Activated CD4-positive, alpha-beta memory T cell treated with anti-CD3 and anti-CD28 coated beads, Interleukin-2, amount 10 ng/mL, durations not matched to agents 7 days and 5 days (primary cell): ENCODE measurements at regions of chr1 and their contacts with region 1.

Region 1: GRCh38 chr1:204431310-204432165 is 19.9 kb upstream of the PPP1R15B start:
- DNase-seq: peak; percentile 81
- H3K4me3 Mint-ChIP-seq: no peak overlapping the region
- H3K27ac Mint-ChIP-seq: no peak overlapping the region
- H3K4me1 Mint-ChIP-seq: no peaks in the 10 kb centered on the region
- H3K27me3 Mint-ChIP-seq: no peaks in the 10 kb centered on the region

Region 2: DNA sequence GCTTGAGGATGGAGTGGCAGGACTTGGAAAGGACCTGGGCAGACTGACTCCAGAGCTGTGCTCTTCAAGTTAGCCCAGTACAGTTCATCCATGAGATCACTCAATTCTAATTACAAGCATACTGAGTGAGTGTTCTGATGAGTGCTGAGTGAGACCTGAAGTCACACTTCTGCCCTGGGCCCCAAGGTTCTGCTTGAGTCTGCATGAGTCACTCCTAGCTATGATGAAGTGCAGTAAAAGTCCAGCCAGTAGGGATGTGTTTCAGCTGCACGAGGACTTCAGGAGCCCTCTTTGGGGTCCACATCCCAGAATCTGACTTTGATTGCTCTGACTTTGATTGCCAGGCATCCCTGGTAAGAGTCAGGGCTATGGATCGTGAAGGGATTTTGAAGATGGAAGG is 107.7 kb before region 1 on chr1:
- CTCF ChIA-PET with region 1: no interaction called
- POLR2A ChIA-PET with region 1: no interaction called
- DNase-seq: peak; percentile 31
- H3K4me3 Mint-ChIP-seq: no peak overlapping the region
- H3K27ac Mint-ChIP-seq: no peak overlapping the region
- H3K4me1 Mint-ChIP-seq: peaks cover 11% of the 10 kb centered on the region
- H3K27me3 Mint-ChIP-seq: no peaks in the 10 kb centered on the region

Region 3: GRCh38 chr1:204411451-204412204 is 19.9 kb before region 1 on chr1 and contains the start of gene PPP1R15B:
- CTCF ChIA-PET with region 1: interaction called, 14 read pairs
- POLR2A ChIA-PET with region 1: interaction called, 3 read pairs
- DNase-seq: peak; percentile 98
- H3K4me3 Mint-ChIP-seq: peak within 1 kb of the TSS; percentile 98
- H3K27ac Mint-ChIP-seq: peak within 1 kb of the TSS; percentile 98
- H3K4me1 Mint-ChIP-seq: peaks cover 19% of the 10 kb centered on the region
- H3K27me3 Mint-ChIP-seq: no peaks in the 10 kb centered on the region
- total RNA-seq, gene PPP1R15B: 76.0 to 76.1 TPM

Region 4: GRCh38 chr1:204417231-204417997 is 14.1 kb before region 1 on chr1:
- CTCF ChIA-PET with region 1: interaction called, 14 read pairs
- POLR2A ChIA-PET with region 1: interaction called, 3 read pairs
- DNase-seq: no peak
- H3K4me3 Mint-ChIP-seq: no peak overlapping the region
- H3K27ac Mint-ChIP-seq: no peak overlapping the region
- H3K4me1 Mint-ChIP-seq: peaks cover 34% of the 10 kb centered on the region
- H3K27me3 Mint-ChIP-seq: no peaks in the 10 kb centered on the region

Region 5: DNA sequence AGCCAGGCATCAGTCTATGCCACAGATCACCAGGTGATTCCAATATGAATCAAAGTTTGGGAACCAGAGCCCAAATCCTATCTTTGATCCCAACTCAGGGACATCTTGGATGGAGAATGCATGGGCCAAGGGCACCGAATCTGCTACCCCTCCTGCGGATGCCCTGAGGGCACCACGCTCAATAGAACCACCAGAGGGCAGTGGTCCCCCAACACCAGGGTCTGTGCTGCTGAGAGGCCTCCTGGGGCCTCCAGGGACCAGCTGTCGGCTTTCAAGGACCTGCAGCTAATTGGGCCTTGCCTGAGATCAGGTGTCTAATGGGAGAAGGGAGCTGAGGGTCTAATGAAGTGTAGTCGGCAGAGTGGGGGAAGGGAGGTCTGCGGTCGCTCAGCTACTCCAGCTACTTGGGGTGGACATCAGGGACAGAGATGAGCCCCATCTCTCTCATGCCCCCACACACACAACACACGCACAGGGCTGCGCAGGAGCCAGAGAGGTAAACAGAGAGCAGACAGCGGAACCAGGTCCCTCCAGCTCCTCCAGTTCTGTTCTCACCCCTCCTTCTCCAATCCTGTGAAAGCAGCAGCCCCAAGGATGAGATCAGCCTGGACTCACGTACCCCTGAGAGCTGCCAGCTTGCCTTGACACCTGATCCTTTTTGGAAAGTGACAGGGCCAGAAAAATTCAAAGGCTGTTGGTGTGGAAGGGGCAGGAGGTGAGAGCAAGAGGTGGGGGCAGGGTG is 15.0 kb after region 1 on chr1:
- CTCF ChIA-PET with region 1: interaction called, 63 read pairs
- POLR2A ChIA-PET with region 1: interaction called, 5 read pairs
- DNase-seq: peak; percentile 79
- H3K4me3 Mint-ChIP-seq: no peak overlapping the region
- H3K27ac Mint-ChIP-seq: peak overlapping the region; percentile 57
- H3K4me1 Mint-ChIP-seq: peaks cover 61% of the 10 kb centered on the region
- H3K27me3 Mint-ChIP-seq: no peaks in the 10 kb centered on the region

Region 6: DNA sequence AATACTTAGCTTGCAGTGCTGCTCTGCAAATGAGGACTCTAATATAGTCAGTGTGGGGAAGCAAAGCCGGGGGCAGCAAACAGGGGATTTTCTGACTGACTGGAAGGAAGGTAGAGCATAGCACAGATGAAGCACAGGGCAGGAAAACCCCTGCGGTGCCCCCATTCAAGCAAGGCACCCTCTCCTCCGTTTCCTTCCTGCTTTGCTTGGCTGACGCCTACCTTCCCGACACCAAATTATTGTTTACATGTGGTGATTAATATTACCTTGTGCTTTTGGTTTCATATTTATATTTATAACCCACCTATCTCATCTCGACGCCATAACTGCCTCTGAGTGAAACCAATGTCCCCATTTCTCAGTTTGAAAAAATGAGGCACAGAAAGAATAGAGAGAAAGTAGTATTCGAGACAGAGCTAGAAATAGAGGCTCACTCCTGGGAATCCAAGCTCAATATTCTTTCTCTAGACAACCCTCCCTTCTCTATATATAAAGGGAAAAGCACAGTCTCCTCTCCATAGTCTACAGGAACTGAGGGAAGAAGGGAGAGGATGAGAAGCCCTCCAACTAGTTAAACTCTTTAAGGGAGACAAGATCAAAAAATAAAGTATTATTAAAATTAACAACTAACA is 21.7 kb after region 1 on chr1:
- CTCF ChIA-PET with region 1: interaction called, 63 read pairs
- POLR2A ChIA-PET with region 1: no interaction called
- DNase-seq: peak; percentile 73
- H3K4me3 Mint-ChIP-seq: peak overlapping the region; percentile 46
- H3K27ac Mint-ChIP-seq: peak overlapping the region; percentile 86
- H3K4me1 Mint-ChIP-seq: peaks cover 47% of the 10 kb centered on the region
- H3K27me3 Mint-ChIP-seq: no peaks in the 10 kb centered on the region

Region 7: GRCh38 chr1:204459706-204460105 is 28.2 kb after region 1 on chr1:
- CTCF ChIA-PET with region 1: interaction called, 12 read pairs
- POLR2A ChIA-PET with region 1: no interaction called
- DNase-seq: no peak
- H3K4me3 Mint-ChIP-seq: no peak overlapping the region
- H3K27ac Mint-ChIP-seq: no peak overlapping the region
- H3K4me1 Mint-ChIP-seq: peaks cover 47% of the 10 kb centered on the region
- H3K27me3 Mint-ChIP-seq: no peaks in the 10 kb centered on the region